BJ (cell line): ENCODE measurements at regions of chr2 and their contacts with region 1.

Region 1: GRCh38 chr2:113203901-113204519 is 30.2 kb downstream of the PSD4 start:
- DNase-seq: no peak
- H3K4me3 ChIP-seq: no peak overlapping the region
- H3K27me3 ChIP-seq: no peaks in the 10 kb centered on the region
- CTCF ChIP-seq: peak; percentile 90

Region 2: DNA sequence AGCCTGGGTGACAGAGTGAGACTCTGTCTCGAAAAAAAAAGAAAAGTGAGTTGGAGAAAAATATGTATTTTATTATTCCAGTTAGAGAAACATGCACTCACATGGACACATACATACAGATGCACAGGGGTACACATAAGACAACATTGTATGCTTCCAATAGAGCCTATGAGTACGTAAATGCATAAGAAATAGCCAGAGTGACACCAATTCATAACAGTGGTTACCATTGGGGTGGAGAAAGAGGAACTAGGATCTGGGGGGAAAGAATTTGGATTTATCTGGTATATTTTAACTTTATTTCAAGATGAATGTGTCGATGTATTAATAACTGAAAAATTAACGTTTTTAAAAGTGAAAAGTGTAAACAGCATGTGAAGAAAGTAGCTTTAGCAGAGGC is 182.7 kb before region 1 on chr2:
- CTCF ChIA-PET with region 1: no interaction called
- POLR2A ChIA-PET with region 1: no interaction called
- DNase-seq: no peak
- H3K4me3 ChIP-seq: no peak overlapping the region
- H3K27me3 ChIP-seq: peaks cover 10% of the 10 kb centered on the region
- CTCF ChIP-seq: no peak

Region 3: GRCh38 chr2:113219889-113220641 is 16.1 kb after region 1 on chr2:
- CTCF ChIA-PET with region 1: interaction called, 21 read pairs
- POLR2A ChIA-PET with region 1: interaction called, 3 read pairs
- DNase-seq: no peak
- H3K4me3 ChIP-seq: no peak overlapping the region
- H3K27me3 ChIP-seq: no peaks in the 10 kb centered on the region
- CTCF ChIP-seq: no peak

Region 4: DNA sequence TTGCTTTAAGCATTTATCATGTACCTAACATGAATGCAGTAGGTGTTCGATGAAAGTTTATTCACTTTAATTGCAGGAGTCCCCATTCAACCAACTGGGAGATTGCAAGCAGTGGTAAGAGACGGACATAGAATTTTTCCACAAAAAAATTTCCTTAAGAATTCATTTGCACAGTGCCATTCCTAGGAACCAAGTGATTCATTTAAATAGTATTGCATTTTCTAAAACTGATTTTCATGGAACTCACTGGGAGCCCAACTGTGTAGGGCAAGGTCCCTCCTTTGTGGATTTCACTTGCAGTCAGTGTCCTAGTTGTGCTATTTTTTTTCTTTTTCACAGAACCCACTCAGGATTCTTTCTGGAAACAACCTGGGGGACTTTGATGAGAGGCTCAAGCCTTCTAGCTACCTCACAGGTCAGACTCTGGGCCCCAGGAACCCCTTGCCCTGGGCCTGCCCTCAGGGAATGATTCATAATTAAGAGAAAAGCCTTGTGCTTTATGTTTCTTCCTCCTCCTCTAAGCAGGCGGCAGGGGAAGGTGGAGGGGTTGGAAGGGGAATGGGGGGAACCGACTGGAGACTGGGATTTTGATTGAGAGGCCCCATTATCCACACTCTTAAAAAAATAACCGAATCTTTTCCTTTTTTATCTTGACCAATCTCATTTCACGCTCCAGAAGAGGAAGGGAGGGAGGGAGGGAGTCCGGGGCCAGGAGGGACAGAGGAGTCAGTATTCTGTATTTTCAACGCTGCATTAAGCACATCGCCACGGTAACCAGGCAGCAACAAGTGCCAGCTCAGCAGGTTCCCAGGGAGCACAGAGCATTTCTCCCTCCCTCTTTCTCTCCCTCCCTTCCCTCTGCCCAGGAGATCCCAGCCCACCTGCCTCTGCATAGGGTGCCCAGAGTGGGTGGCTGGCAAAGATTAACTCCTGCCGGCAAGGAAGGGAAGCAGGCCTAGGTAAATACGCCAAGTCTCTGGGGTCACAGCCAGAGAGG is 21.6 kb after region 1 on chr2:
- CTCF ChIA-PET with region 1: interaction called, 21 read pairs
- POLR2A ChIA-PET with region 1: interaction called, 3 read pairs
- DNase-seq: no peak
- H3K4me3 ChIP-seq: no peak overlapping the region
- H3K27me3 ChIP-seq: no peaks in the 10 kb centered on the region
- CTCF ChIP-seq: no peak

Region 5: DNA sequence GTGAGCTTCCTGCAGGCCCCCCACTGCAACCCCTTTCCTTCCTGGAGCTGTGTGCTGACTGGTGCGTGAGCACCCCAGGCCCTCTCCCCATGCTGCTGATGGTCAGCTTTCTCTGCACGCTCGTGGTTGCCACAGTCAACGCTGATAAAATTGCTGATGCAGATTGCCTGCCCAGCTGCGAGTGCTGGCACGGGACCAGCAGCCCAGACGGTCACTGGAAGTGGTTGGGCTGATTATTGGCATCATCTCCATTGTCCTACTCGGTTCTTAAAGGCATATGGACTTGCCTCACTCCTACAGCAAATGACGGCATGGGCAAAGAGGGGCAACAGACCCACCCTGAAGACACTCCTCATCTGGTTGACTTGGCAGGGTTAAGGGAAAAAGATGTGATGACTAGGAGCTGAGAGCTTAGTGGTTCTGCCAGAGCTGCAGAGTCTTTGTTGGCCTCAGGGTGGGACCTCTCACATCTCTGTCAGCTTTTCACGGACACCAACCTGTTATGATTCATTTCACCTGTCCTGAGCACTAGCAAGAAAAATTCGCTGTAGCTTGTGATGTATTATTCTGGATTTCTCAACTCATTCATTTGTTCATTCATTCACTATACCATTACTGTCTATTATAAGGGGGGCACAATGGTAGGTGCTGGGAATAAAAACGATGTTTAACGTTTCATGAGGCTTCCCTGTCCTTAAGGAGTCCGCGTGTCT is 36.3 kb after region 1 on chr2:
- CTCF ChIA-PET with region 1: interaction called, 119 read pairs
- POLR2A ChIA-PET with region 1: no interaction called
- DNase-seq: peak; percentile 74
- H3K4me3 ChIP-seq: no peak overlapping the region
- H3K27me3 ChIP-seq: no peaks in the 10 kb centered on the region
- CTCF ChIP-seq: no peak

Region 6: DNA sequence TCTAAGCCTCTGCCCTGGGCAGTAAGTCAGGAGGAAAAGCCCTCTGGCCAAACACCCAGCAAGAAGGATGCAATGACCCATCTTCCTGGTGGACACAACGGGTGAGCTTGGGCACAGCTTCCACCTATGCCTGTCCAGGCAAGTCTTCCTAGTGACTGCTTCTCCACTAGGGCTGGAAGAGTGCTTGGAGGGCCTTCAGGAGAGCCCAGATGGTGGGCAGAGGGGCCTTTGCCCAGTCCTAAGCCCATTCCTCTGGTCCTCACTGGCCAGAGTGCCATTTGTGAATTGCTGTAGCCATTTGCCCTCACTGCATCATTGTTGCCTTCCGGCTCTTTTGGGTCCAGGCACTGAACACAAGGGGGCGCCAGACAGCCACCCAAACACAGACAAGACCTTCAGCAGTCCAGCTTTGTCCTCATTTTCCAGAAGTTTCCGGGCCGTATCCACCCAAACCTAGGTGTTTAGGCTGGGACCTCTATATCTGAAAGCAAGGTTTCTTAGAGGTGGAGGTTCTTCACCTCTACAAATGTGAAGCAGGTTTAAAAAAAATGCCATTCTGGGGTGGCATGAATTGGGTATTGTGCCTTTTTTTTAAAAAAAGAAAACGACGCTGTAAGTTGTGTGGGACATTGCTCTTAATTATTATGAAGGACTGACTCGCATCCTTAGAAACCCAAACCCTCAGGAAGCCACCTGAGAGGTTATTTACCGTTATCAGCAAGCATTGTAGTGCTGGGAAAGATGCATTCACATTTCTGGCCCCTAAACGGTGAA is 45.2 kb after region 1 on chr2:
- CTCF ChIA-PET with region 1: interaction called, 95 read pairs
- POLR2A ChIA-PET with region 1: no interaction called
- DNase-seq: no peak
- H3K4me3 ChIP-seq: no peak overlapping the region
- H3K27me3 ChIP-seq: no peaks in the 10 kb centered on the region
- CTCF ChIP-seq: peak; percentile 90

Region 7: GRCh38 chr2:113370478-113371091 is 166.6 kb after region 1 on chr2:
- CTCF ChIA-PET with region 1: interaction called, 59 read pairs
- POLR2A ChIA-PET with region 1: no interaction called
- DNase-seq: no peak
- H3K4me3 ChIP-seq: no peak overlapping the region
- H3K27me3 ChIP-seq: no peaks in the 10 kb centered on the region; the same call in 1 of the 2 replicates
- CTCF ChIP-seq: peak; percentile 60

Region 8: GRCh38 chr2:113390124-113390849 is 186.3 kb after region 1 on chr2:
- CTCF ChIA-PET with region 1: interaction called, 22 read pairs
- POLR2A ChIA-PET with region 1: no interaction called
- DNase-seq: peak; percentile 31
- H3K4me3 ChIP-seq: no peak overlapping the region
- H3K27me3 ChIP-seq: no peaks in the 10 kb centered on the region
- CTCF ChIP-seq: peak; percentile 72